Heart right ventricle (tissue), 16 donors: ENCODE measurements at regions of chr15 and their contacts with region 1.

Region 1: DNA sequence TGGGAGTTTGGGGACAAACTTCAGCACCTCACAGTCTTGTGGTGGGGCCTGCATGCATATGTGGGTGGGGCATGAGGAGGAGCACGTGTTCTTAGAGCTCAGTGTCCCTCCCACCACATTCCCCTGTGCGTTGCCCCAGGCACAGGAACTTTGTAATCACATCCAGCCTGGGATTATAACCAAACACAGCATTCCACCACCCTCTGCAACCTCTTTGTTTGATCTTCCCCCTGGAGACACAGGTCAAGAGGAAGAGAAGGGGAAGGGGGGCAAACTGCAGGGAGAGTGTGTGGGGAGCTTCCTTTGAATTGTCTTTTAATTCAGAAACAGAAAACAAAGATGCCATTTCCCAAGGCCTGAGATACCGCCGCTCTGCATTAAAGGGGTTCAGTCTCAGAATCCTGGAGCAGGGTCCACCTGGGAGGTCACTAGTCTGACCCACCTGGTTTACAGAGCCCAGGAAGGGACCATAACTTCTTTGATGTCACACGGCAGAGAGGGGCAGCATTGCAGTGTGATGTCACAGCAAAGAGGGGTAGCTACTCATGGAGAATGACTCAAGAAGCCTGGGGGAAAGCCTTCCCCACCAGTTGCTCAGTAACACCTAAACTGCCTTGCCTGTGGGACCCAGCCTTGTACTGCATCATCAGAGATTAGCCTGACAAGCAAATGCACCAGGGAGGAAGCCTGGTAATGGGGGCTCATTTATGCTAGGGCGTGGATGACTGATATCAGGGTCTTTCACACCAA is 106.3 kb upstream of the RNU6-1 start:
- DNase-seq: peak in 1 of 2 donors; percentile 22
- ATAC-seq: peak in 7 of 8 donors; percentile 13 to 84 (median 66)
- H3K4me3 ChIP-seq: peak overlapping the region in 1 of 10 donors; percentile 9
- H3K27ac ChIP-seq: peak overlapping the region; percentile 6 to 82 (median 62)
- H3K4me1 ChIP-seq: peaks cover 11 to 50% (median 25%) of the 10 kb centered on the region in 9 donors
- H3K27me3 ChIP-seq: no peaks in the 10 kb centered on the region
- CTCF ChIP-seq: no peak

Region 2: GRCh38 chr15:67914537-67915460 is 31.3 kb before region 1 on chr15:
- intact Hi-C with region 1: loop called in 1 of 10 experiments (anchors 2 kb)
- DNase-seq: peak; percentile 47 to 60
- ATAC-seq: peak; percentile 25 to 86 (median 75)
- H3K4me3 ChIP-seq: no peak overlapping the region
- H3K27ac ChIP-seq: peak overlapping the region; percentile 15 to 91 (median 78)
- H3K4me1 ChIP-seq: peaks cover 4 to 45% (median 32%) of the 10 kb centered on the region in 9 donors
- H3K27me3 ChIP-seq: no peaks in the 10 kb centered on the region
- CTCF ChIP-seq: no peak

Region 3: GRCh38 chr15:67999320-68000100 is 53.4 kb after region 1 on chr15:
- intact Hi-C with region 1: no loop called
- DNase-seq: no peak
- ATAC-seq: no peak
- H3K4me3 ChIP-seq: no peak overlapping the region
- H3K27ac ChIP-seq: no peak overlapping the region
- H3K4me1 ChIP-seq: no peaks in the 10 kb centered on the region
- H3K27me3 ChIP-seq: no peaks in the 10 kb centered on the region
- CTCF ChIP-seq: no peak